PC-9 (cell line): ENCODE measurements at regions of chr3 and their contacts with region 1.

Region 1: GRCh38 chr3:32184187-32184730 is 54.2 kb upstream of the CMTM8 start:
- DNase-seq: no peak
- H3K4me3 ChIP-seq: no peak overlapping the region
- H3K27ac ChIP-seq: no peak overlapping the region
- H3K4me1 ChIP-seq: no peaks in the 10 kb centered on the region
- H3K27me3 ChIP-seq: no peaks in the 10 kb centered on the region
- CTCF ChIP-seq: no peak

Region 2: GRCh38 chr3:32383136-32383711 is 199.0 kb after region 1 on chr3:
- CTCF ChIA-PET with region 1: interaction called, 21 read pairs
- POLR2A ChIA-PET with region 1: no interaction called
- intact Hi-C with region 1: no loop called
- DNase-seq: no peak
- H3K4me3 ChIP-seq: no peak overlapping the region
- H3K27ac ChIP-seq: no peak overlapping the region
- H3K4me1 ChIP-seq: no peaks in the 10 kb centered on the region
- H3K27me3 ChIP-seq: no peaks in the 10 kb centered on the region
- CTCF ChIP-seq: no peak